Activated T-helper 1 cell treated with anti-CD3 and anti-CD28 coated beads, Interleukin-12 subunit alpha, Interleukin-12 subunit beta, Interleukin-2, Interleukin-4 antibody, amounts not matched to agents 30 ng/mL and 10 ng/mL and 1 ng/mL, durations not matched to agents 14 hours and 24 hours and 36 hours (primary cell): ENCODE measurements at regions of chr5 and their contacts with region 1.

Region 1: GRCh38 chr5:94693043-94693822 is 74.8 kb downstream of the SLF1 start:
- DNase-seq: no peak
- H3K4me3 Mint-ChIP-seq: no peak overlapping the region
- H3K27ac Mint-ChIP-seq: no peak overlapping the region
- H3K4me1 Mint-ChIP-seq: peaks cover 6% of the 10 kb centered on the region
- H3K27me3 Mint-ChIP-seq: no peaks in the 10 kb centered on the region

Region 2: GRCh38 chr5:93915142-93915553 is 778.1 kb before region 1 on chr5:
- intact Hi-C with region 1: loop called (anchors 5 kb)
- DNase-seq: no peak
- H3K4me3 Mint-ChIP-seq: no peak overlapping the region
- H3K27ac Mint-ChIP-seq: no peak overlapping the region
- H3K4me1 Mint-ChIP-seq: no peaks in the 10 kb centered on the region
- H3K27me3 Mint-ChIP-seq: no peaks in the 10 kb centered on the region

Region 3: DNA sequence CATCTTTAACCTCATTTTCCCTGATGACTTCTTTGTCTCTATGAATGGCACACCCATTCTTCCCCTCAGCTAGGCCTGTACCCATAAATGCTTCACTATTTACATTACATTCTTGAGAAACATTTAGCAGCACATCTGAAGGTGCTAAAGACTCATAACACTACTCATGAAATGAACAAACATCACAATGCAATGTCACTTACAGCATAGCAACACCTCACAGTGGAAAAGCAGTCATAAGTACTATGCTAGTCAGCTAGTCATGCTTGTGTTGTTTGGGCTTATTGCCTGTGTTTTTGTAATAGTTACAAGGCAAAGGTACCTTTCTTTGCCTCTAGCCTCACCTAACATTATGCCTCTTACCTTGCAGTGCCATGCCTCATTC is 303.7 kb before region 1 on chr5:
- intact Hi-C with region 1: loop called (anchors 1 kb)
- DNase-seq: no peak
- H3K4me3 Mint-ChIP-seq: no peak overlapping the region
- H3K27ac Mint-ChIP-seq: peak overlapping the region; percentile 92
- H3K4me1 Mint-ChIP-seq: peaks cover 16% of the 10 kb centered on the region
- H3K27me3 Mint-ChIP-seq: no peaks in the 10 kb centered on the region

Region 4: DNA sequence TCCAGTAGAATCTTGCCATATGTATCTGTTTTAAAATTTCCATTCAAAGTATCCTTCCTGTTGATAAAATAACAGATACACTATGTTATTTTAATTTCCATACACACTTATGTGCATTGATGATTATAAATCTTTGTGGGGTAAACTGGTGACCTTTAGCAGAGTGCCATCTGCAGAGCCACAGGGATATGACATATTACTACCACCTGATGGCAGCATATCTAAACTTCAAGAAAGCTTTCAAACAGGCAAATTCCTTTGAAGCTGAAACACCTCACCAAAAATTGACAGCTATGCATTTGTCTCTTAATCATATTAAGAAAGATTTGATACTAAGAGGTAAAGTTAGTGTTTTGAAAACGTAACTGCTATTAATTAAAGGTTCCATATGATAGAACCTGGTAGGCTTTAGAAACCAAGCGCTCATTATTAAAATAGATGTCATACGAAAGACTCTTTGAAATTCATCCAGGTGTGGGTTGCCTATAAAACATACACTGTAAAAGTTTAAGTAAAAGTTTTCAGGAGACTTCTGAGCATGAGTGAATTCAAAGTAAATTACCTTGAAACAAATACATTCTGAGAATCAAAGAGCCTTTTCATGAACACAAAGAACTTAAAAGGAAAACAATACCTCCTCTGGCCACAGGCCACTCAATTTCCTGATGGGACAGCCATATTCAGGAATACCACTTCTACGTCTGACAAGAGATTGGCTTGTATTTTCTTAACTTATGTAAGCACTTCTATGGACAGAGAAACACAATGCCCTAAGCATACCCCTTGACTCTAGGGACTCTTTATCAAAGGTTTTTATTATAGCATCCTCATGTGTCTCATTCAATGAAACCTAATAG is 168.2 kb before region 1 on chr5:
- intact Hi-C with region 1: loop called (anchors 1 kb)
- DNase-seq: peak; percentile 22
- H3K4me3 Mint-ChIP-seq: no peak overlapping the region
- H3K27ac Mint-ChIP-seq: no peak overlapping the region
- H3K4me1 Mint-ChIP-seq: peaks cover 9% of the 10 kb centered on the region
- H3K27me3 Mint-ChIP-seq: no peaks in the 10 kb centered on the region

Region 5: GRCh38 chr5:94544031-94544650 is 149.1 kb before region 1 on chr5:
- intact Hi-C with region 1: no loop called
- DNase-seq: no peak
- H3K4me3 Mint-ChIP-seq: no peak overlapping the region
- H3K27ac Mint-ChIP-seq: no peak overlapping the region
- H3K4me1 Mint-ChIP-seq: peaks cover 21% of the 10 kb centered on the region
- H3K27me3 Mint-ChIP-seq: peaks cover 2% of the 10 kb centered on the region

Region 6: GRCh38 chr5:94577466-94578245 is 115.6 kb before region 1 on chr5:
- intact Hi-C with region 1: loop called (anchors 5 kb)
- DNase-seq: peak; percentile 13
- H3K4me3 Mint-ChIP-seq: peak overlapping the region; percentile 12
- H3K27ac Mint-ChIP-seq: peak overlapping the region; percentile 59
- H3K4me1 Mint-ChIP-seq: peaks cover 62% of the 10 kb centered on the region
- H3K27me3 Mint-ChIP-seq: no peaks in the 10 kb centered on the region

Region 7: DNA sequence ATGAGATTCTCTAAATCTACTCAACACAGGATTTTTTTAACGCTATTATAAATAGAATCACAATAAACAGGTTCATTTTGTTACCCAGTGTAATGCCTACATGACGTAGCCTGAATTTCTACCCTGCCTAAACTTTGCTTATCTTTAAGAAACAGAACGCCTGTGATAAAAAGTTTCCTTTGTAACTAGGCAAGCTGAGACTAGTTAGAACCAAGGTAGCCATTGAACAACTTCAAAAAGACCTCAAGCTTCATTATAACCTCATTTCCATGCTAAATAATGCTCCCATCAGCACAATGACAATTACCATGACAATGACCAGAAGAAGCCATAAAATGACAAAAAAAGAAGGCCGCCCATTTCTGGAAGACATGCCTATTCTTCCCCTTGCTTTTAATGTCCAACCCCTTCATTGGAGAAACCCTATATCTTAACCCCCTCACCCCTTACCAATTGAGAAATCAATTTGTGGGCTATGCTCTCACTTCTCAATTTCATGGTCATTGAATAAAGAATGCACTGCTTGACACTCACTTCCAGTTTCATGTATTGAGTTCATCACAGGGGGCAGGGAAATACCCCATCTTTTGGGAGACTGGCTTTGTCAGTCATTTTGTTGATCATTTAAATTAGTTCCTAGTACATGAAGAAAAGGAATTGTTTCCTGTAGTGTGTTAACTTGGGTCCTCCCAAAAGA is 314.8 kb after region 1 on chr5:
- intact Hi-C with region 1: no loop called
- DNase-seq: no peak
- H3K4me3 Mint-ChIP-seq: no peak overlapping the region
- H3K27ac Mint-ChIP-seq: no peak overlapping the region
- H3K4me1 Mint-ChIP-seq: no peaks in the 10 kb centered on the region
- H3K27me3 Mint-ChIP-seq: no peaks in the 10 kb centered on the region